B cell (primary cell): ENCODE measurements at regions of chr2 and their contacts with region 1.

Region 1: GRCh38 chr2:196131384-196131937 is 39.9 kb downstream of the STK17B start:
- DNase-seq: peak; percentile 63
- ATAC-seq: peak; percentile 41
- H3K4me3 ChIP-seq: no peak overlapping the region
- H3K4me3 Mint-ChIP-seq: no peak overlapping the region
- H3K27ac ChIP-seq: no peak overlapping the region
- H3K27ac Mint-ChIP-seq: peak overlapping the region; percentile 53
- H3K4me1 ChIP-seq: no peaks in the 10 kb centered on the region
- H3K4me1 Mint-ChIP-seq: no peaks in the 10 kb centered on the region
- H3K27me3 ChIP-seq: no peaks in the 10 kb centered on the region
- H3K27me3 Mint-ChIP-seq: no peaks in the 10 kb centered on the region
- CTCF ChIP-seq: peak; percentile 34

Region 2: DNA sequence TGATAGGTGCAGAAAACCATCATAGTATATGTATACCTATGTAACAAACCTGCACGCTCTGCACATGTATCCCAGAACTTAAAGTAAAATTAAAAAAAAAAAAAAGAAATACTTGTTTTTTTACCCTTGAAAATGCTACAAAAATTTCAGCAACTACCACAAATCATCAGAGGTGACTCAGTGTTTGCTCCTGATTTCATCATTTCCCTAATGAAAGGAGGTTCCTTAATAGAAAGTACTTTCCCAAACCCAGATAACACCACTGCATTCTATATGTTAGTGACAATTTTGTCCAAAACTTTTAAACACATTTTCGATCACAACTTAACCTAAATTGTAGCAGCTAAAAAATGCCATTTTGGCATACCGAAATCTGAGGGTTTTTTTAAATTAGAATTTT is 311.1 kb before region 1 on chr2:
- CTCF ChIA-PET with region 1: no interaction called
- POLR2A ChIA-PET with region 1: no interaction called
- intact Hi-C with region 1: no loop called
- DNase-seq: no peak
- ATAC-seq: no peak
- H3K4me3 ChIP-seq: no peak overlapping the region
- H3K4me3 Mint-ChIP-seq: no peak overlapping the region
- H3K27ac ChIP-seq: no peak overlapping the region
- H3K27ac Mint-ChIP-seq: no peak overlapping the region
- H3K4me1 ChIP-seq: no peaks in the 10 kb centered on the region
- H3K4me1 Mint-ChIP-seq: no peaks in the 10 kb centered on the region
- H3K27me3 ChIP-seq: no peaks in the 10 kb centered on the region
- H3K27me3 Mint-ChIP-seq: peaks cover 7% of the 10 kb centered on the region
- CTCF ChIP-seq: no peak

Region 3: GRCh38 chr2:196101325-196101991 is 30.0 kb before region 1 on chr2:
- CTCF ChIA-PET with region 1: no interaction called
- POLR2A ChIA-PET with region 1: no interaction called
- intact Hi-C with region 1: no loop called
- DNase-seq: peak; percentile 67
- ATAC-seq: peak; percentile 86
- H3K4me3 ChIP-seq: no peak overlapping the region
- H3K4me3 Mint-ChIP-seq: peak overlapping the region; percentile 64
- H3K27ac ChIP-seq: peak overlapping the region; percentile 49 to 66
- H3K27ac Mint-ChIP-seq: peak overlapping the region; percentile 79
- H3K4me1 ChIP-seq: peaks cover 48 to 49% of the 10 kb centered on the region in 2 donors
- H3K4me1 Mint-ChIP-seq: peaks cover 68% of the 10 kb centered on the region
- H3K27me3 ChIP-seq: no peaks in the 10 kb centered on the region
- H3K27me3 Mint-ChIP-seq: no peaks in the 10 kb centered on the region
- CTCF ChIP-seq: no peak

Region 4: GRCh38 chr2:196117214-196117705 is 14.2 kb before region 1 on chr2:
- CTCF ChIA-PET with region 1: no interaction called
- POLR2A ChIA-PET with region 1: no interaction called
- intact Hi-C with region 1: no loop called
- DNase-seq: no peak
- ATAC-seq: no peak
- H3K4me3 ChIP-seq: no peak overlapping the region
- H3K4me3 Mint-ChIP-seq: no peak overlapping the region
- H3K27ac ChIP-seq: no peak overlapping the region
- H3K27ac Mint-ChIP-seq: no peak overlapping the region
- H3K4me1 ChIP-seq: peaks cover 4% of the 10 kb centered on the region in 2 donors
- H3K4me1 Mint-ChIP-seq: peaks cover 6% of the 10 kb centered on the region
- H3K27me3 ChIP-seq: no peaks in the 10 kb centered on the region
- H3K27me3 Mint-ChIP-seq: no peaks in the 10 kb centered on the region
- CTCF ChIP-seq: no peak

Region 5: GRCh38 chr2:196337208-196337953 is 205.9 kb after region 1 on chr2:
- CTCF ChIA-PET with region 1: interaction called, 28 read pairs
- POLR2A ChIA-PET with region 1: no interaction called
- intact Hi-C with region 1: loop called (anchors 1 kb)
- DNase-seq: peak; percentile 58
- ATAC-seq: peak; percentile 51
- H3K4me3 ChIP-seq: no peak overlapping the region
- H3K4me3 Mint-ChIP-seq: no peak overlapping the region
- H3K27ac ChIP-seq: peak overlapping the region in 1 of 2 donors; percentile 52
- H3K27ac Mint-ChIP-seq: peak overlapping the region; percentile 43
- H3K4me1 ChIP-seq: peaks cover 10 to 11% of the 10 kb centered on the region in 2 donors
- H3K4me1 Mint-ChIP-seq: peaks cover 19% of the 10 kb centered on the region
- H3K27me3 ChIP-seq: no peaks in the 10 kb centered on the region
- H3K27me3 Mint-ChIP-seq: no peaks in the 10 kb centered on the region
- CTCF ChIP-seq: peak; percentile 66

Region 6: DNA sequence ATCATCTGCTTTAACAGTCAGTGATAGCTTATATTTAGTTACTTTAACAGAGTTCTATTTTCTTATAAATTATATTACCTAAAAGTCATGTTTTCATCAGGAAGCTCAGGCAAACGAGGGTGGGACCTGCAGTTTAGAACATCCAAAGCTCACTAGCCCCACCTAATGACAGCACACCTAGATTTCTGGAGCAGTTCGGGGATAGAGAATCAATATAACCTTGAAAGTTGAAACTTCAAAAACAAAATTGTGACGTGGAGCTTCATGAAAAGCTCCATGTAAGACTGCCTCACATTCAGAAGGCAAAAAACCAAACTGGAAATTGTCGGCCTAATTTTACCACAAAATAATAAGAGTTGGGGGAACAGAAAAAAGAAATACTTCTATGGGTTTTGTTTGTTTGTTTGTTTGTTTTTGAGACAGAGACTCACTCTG is 322.2 kb after region 1 on chr2:
- CTCF ChIA-PET with region 1: interaction called, 7 read pairs
- POLR2A ChIA-PET with region 1: no interaction called
- intact Hi-C with region 1: loop called (anchors 2 kb)
- DNase-seq: peak; percentile 63
- ATAC-seq: peak; percentile 43
- H3K4me3 ChIP-seq: no peak overlapping the region
- H3K4me3 Mint-ChIP-seq: no peak overlapping the region
- H3K27ac ChIP-seq: no peak overlapping the region
- H3K27ac Mint-ChIP-seq: no peak overlapping the region
- H3K4me1 ChIP-seq: no peaks in the 10 kb centered on the region
- H3K4me1 Mint-ChIP-seq: no peaks in the 10 kb centered on the region
- H3K27me3 ChIP-seq: peaks cover 0 to 5% (median 0%) of the 10 kb centered on the region in 4 experiments
- H3K27me3 Mint-ChIP-seq: peaks cover 23% of the 10 kb centered on the region
- CTCF ChIP-seq: peak; percentile 52